Right ventricle myocardium superior (tissue), 1 donor: ENCODE measurements at regions of chr5 and their contacts with region 1.

Region 1: DNA sequence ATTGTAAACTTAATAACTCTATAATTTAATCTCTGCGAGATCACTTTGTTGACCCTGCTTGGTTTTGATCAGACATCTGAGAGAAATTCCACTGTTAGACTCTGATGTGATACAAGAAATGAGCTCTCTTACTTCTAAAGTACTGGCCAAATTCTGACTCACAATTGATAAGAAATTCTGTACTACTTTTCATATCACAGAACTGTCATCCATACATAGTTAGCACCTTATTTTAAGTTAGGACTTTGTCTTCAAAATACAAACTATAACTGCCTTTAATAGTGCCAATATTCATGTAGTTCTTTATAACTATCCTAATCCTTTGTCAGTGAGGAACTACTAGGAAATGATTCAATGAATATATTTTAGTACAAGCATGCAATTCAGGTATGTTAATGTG is 23.4 kb downstream of the MARCHF11 start:
- DNase-seq: no peak
- ATAC-seq: peak; percentile 71

Region 2: GRCh38 chr5:16108418-16108817 is 47.7 kb before region 1 on chr5:
- intact Hi-C with region 1: no loop called
- DNase-seq: no peak
- ATAC-seq: no peak

Region 3: DNA sequence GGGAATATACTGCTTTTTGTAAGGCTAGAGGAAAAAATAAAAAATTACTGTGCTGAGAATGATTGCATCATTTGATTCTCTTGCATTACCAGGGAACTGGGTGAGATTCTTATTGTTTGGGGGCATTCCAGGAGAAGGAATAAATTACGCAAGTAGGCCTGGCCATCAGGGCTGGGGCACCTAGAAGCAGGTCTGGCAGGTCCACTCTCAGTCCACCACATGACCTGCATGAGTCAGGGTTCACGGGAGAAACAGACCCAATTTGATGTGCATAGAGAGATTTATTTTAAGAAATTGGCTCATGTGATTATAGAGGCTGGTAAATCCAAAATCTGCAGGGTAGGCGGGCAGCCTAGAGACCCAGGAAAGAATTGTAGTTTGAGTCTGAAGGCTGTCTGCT is 249.9 kb after region 1 on chr5:
- intact Hi-C with region 1: no loop called
- DNase-seq: no peak
- ATAC-seq: no peak

Region 4: DNA sequence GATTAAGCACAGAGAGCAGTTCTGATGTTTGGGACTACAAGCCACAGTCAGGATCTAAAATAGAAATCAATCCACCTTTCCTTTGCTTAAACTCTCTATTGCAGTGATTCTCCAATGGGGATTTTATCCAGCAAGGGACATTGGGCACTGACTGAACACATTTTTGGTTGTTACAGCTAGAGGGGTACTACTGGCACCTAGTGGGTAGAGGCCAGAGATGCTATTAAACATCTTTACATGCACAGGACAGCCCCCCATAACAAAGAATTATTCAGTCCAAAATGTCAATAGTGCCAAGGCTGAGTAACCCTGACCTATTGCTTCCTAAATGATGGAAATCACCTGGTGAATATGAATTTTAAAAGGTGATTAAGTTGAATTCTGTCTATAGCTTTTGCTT is 297.5 kb after region 1 on chr5:
- intact Hi-C with region 1: loop called (anchors 5 kb)
- DNase-seq: no peak
- ATAC-seq: peak; percentile 34